ENCODE measurements at regions of chr1 and their contacts with region 1.

Region 1: GRCh38 chr1:209827384-209828262 is at the start of gene UTP25:
- DNase-seq: peak; percentile 94 to 96
- H3K4me3 ChIP-seq: peak within 1 kb of the TSS; percentile 92
- H3K4me3 Mint-ChIP-seq: peak within 1 kb of the TSS; percentile 83
- H3K27ac Mint-ChIP-seq: peak within 1 kb of the TSS; percentile 94
- H3K4me1 ChIP-seq: peaks cover 17% of the 10 kb centered on the region
- H3K4me1 Mint-ChIP-seq: peaks cover 29% of the 10 kb centered on the region
- H3K27me3 ChIP-seq: no peaks in the 10 kb centered on the region
- H3K27me3 Mint-ChIP-seq: peaks cover 2% of the 10 kb centered on the region
- CTCF ChIP-seq: peak; percentile 61 to 83
- total RNA-seq, gene UTP25: 9.5 and 9.8 TPM in 2 replicates

Region 2: GRCh38 chr1:209784265-209785169 is 43.1 kb before region 1 on chr1 and contains the start of gene C1orf74:
- CTCF ChIA-PET with region 1: interaction called, 3 read pairs
- POLR2A ChIA-PET with region 1: interaction called, 8 read pairs
- intact Hi-C with region 1: loop called (anchors 1 kb)
- DNase-seq: peak; percentile 98 to 99
- H3K4me3 ChIP-seq: peak within 1 kb of the TSS; percentile 73
- H3K4me3 Mint-ChIP-seq: peak within 1 kb of the TSS; percentile 90
- H3K27ac Mint-ChIP-seq: peak within 1 kb of the TSS; percentile 96
- H3K4me1 ChIP-seq: peaks cover 31% of the 10 kb centered on the region
- H3K4me1 Mint-ChIP-seq: peaks cover 19% of the 10 kb centered on the region
- H3K27me3 ChIP-seq: no peaks in the 10 kb centered on the region
- H3K27me3 Mint-ChIP-seq: no peaks in the 10 kb centered on the region
- CTCF ChIP-seq: no peak
- total RNA-seq, gene C1orf74: 4.5 TPM in 2 replicates

Measured in Caco-2 (cell line).